Heart right ventricle (tissue), 16 donors: ENCODE measurements at regions of chrX and their contacts with region 1.

Region 1: DNA sequence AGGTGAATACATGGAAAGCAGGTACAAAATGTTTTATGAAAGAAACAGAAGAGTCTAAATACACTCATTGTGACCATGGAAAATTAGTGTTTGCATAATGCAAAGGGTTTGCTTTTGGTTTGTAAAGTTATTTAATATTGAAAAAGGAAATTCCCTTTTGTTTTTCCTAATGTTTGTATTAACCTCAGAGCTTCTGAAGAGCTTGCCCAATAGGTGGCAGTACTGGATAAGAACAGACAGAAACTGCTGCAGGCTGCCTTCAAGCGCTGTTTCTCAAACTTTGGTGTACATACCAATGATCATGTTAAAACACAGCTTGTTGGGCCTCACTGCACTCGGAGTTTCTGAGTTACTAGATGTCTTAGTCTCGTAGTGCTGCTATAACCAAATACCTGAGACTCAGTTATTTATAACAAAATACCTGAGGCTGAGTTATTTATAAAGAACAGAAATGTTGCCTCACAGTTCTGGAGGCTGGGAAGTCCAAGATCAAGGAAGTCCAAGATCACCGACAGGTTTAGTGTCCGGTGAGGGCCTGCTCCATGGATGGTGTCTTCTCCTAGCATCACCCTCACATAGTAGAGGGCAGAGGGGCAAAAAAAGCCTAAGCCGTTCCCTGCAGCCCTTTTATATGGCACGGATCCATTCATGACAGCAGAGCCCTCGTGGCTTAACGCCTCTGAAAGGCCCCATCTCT is 54.2 kb downstream of the SUPT20HL2 start:
- DNase-seq: peak in 1 of 2 donors; percentile 20
- ATAC-seq: peak in 3 of 8 donors; percentile 47 to 58 (median 52)
- H3K4me3 ChIP-seq: no peak overlapping the region
- H3K27ac ChIP-seq: no peak overlapping the region
- H3K4me1 ChIP-seq: peaks cover 0 to 9% (median 0%) of the 10 kb centered on the region in 9 donors
- H3K27me3 ChIP-seq: peaks cover 0 to 77% (median 0%) of the 10 kb centered on the region in 7 donors
- CTCF ChIP-seq: peak in 8 of 9 donors; percentile 14 to 64 (median 56)

Region 2: GRCh38 chrX:24100713-24101112 is 159.0 kb before region 1 on chrX:
- intact Hi-C with region 1: no loop called
- DNase-seq: no peak
- ATAC-seq: no peak
- H3K4me3 ChIP-seq: no peak overlapping the region
- H3K27ac ChIP-seq: no peak overlapping the region
- H3K4me1 ChIP-seq: no peaks in the 10 kb centered on the region
- H3K27me3 ChIP-seq: peaks cover 0 to 31% (median 0%) of the 10 kb centered on the region in 7 donors
- CTCF ChIP-seq: no peak

Region 3: DNA sequence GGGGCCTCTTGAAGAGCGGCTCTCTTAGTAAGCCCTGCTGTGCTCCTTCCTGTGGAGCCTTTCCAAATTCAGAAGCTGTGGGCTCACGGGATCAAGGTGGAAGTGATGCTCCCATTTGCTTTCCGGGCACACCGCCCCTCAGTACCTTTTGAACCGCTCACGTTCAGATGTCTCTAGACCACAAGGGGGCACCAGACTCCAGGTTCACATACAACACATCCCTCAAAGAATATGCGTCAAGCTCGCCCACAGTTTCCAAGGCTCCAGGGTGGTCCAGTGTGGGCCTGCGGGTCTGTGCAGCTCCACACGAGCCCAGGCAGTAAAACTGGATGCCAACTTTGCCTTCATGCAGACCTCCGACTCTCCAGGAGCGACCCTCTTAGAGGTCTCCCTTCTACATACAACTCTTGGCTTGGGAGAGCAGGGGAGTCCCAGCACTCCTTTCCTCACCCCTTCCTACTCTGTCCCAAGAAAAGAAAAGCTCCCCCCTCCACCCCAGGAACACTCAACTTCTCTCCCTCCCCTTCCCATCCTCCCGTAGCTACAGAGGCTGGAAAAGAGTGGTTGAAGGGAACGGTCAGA is 111.8 kb after region 1 on chrX:
- intact Hi-C with region 1: loop called in 1 of 10 experiments (anchors 5 kb)
- DNase-seq: peak in 1 of 2 donors; percentile 47
- ATAC-seq: peak; percentile 47 to 81 (median 62)
- H3K4me3 ChIP-seq: no peak overlapping the region
- H3K27ac ChIP-seq: no peak overlapping the region
- H3K4me1 ChIP-seq: no peaks in the 10 kb centered on the region
- H3K27me3 ChIP-seq: peaks cover 0 to 48% (median 0%) of the 10 kb centered on the region in 7 donors
- CTCF ChIP-seq: peak; percentile 24 to 74 (median 58)